GM23248 (cell line): ENCODE measurements at regions of chr6 and their contacts with region 1.

Region 1: GRCh38 chr6:27902335-27903314 is 9.6 kb downstream of the OR2B2 start:
- DNase-seq: peak; percentile 80
- H3K4me3 ChIP-seq: peak overlapping the region; percentile 98
- H3K27ac ChIP-seq: peak overlapping the region; percentile 79
- H3K4me1 ChIP-seq: no peaks in the 10 kb centered on the region
- H3K27me3 ChIP-seq: no peaks in the 10 kb centered on the region

Region 2: DNA sequence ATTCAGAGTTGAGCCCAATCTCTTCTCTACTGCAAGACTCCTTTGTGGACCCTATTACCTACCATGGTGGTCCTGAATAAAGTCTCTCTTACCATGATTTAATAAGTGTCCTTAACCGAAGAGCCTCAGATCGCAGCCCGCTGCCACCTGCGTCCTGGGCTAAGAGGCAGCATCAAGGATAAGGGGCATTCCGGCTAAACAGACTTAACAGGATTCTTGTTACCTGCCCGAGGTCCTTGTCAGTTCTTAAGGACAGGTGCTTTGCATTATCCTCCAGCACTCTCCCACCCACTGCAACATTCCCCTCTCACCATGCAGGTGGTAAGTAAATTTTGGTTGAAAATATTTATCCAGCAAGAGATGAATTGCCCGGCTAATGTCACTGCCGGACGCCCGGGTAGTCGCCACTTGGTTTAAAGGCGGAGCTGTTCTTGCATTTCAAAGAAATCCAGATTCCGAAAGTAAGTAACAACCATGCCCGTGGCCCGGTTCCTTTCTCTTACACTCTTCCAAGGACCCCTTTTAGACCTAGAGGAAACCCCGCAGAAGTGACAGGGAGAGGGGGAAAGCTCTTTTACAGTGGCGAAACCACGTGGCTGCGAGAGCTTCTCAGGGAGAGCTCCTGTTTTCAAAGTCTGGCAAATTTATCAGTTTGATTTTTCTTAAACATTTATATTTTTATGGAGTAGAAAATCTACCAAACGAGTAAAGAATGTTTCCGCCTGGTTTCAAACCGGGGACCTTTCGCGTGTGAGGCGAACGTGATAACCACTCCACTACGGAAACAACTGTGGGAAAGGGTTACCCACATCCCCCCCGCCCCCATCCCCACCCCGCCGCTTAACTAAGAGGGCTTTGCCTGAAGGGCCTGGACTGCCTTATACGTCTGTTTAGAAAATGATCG is 697.0 kb before region 1 on chr6:
- in situ Hi-C with region 1: no loop called
- DNase-seq: peak; percentile 6
- H3K4me3 ChIP-seq: peak overlapping the region; percentile 63
- H3K27ac ChIP-seq: no peak overlapping the region
- H3K4me1 ChIP-seq: no peaks in the 10 kb centered on the region
- H3K27me3 ChIP-seq: peaks cover 37% of the 10 kb centered on the region

Region 3: GRCh38 chr6:28368522-28368921 is 465.9 kb after region 1 on chr6:
- in situ Hi-C with region 1: loop called (anchors 10 kb)
- DNase-seq: no peak
- H3K4me3 ChIP-seq: no peak overlapping the region
- H3K27ac ChIP-seq: no peak overlapping the region
- H3K4me1 ChIP-seq: no peaks in the 10 kb centered on the region
- H3K27me3 ChIP-seq: no peaks in the 10 kb centered on the region